Common myeloid progenitor, CD34-positive (primary cell): ENCODE measurements at regions of chr20 and their contacts with region 1.

Region 1: DNA sequence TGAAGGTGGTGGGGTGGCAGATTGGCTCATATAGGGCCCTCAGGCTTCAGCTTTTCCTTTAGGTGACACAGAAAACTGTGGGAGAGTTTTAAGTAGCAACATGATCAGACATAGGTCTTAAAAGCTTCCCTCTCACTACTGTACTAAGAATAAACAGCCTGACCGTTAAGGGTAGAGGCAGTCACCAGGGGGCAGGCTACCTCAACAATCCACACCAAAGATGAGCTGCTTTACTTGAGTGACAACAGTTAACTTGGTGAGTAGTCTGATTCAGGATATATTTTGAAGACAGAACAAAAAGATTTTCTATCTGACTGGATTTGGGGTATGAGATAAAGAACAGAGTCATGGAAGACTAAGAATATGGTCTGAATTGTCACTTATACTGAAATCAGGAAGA is 193.1 kb upstream of the SHLD1 start:
- DNase-seq: peak; percentile 50 to 75 (median 68)
- H3K4me3 ChIP-seq: no peak overlapping the region
- H3K27ac ChIP-seq: no peak overlapping the region
- H3K4me1 ChIP-seq: no peaks in the 10 kb centered on the region
- H3K27me3 ChIP-seq: no peaks in the 10 kb centered on the region

Region 2: GRCh38 chr20:5480824-5481600 is 76.1 kb before region 1 on chr20:
- CTCF ChIA-PET with region 1: no interaction called
- POLR2A ChIA-PET with region 1: no interaction called
- DNase-seq: no peak
- H3K4me3 ChIP-seq: no peak overlapping the region
- H3K27ac ChIP-seq: no peak overlapping the region
- H3K4me1 ChIP-seq: peaks cover 0 to 13% (median 4%) of the 10 kb centered on the region in 4 experiments
- H3K27me3 ChIP-seq: no peaks in the 10 kb centered on the region

Region 3: DNA sequence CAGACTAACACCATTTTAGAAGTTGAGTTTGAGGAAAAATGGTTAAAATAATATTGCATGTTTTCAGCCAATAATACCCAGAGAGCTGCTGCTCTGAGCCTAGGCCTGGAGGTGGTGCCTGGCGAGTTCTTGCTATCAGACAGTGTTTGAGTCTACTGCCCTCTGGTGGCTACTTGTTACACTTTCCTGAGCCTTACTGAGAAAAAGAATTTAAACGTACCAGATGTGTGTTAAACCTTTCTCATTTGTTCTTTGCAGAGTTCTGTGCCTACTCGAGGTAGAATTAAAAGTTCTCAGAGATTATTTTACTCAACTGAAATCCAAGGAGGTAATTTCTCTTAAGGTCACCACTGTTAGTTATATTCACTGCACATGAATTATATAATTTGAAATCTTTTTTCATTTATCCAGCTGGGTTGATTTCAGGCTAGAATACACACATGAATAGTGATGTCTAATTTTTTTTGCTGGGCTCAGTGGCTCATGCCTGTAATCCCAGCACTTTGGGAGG is 231.3 kb after region 1 on chr20:
- CTCF ChIA-PET with region 1: interaction called, 28 read pairs
- POLR2A ChIA-PET with region 1: no interaction called
- DNase-seq: peak; percentile 89 to 95 (median 92)
- H3K4me3 ChIP-seq: no peak overlapping the region
- H3K27ac ChIP-seq: no peak overlapping the region
- H3K4me1 ChIP-seq: peaks cover 0 to 7% (median 0%) of the 10 kb centered on the region in 4 experiments
- H3K27me3 ChIP-seq: no peaks in the 10 kb centered on the region